Endothelial cell of umbilical vein (primary cell): ENCODE measurements at regions of chr2 and their contacts with region 1.

Region 1: GRCh38 chr2:118003396-118003824 is 10.5 kb downstream of the CCDC93 start:
- DNase-seq: peak; percentile 88
- H3K4me3 ChIP-seq: no peak overlapping the region
- H3K27ac ChIP-seq: peak overlapping the region; percentile 42
- H3K4me1 ChIP-seq: no peaks in the 10 kb centered on the region
- H3K27me3 ChIP-seq: no peaks in the 10 kb centered on the region
- CTCF ChIP-seq: peak; percentile 74 to 76
- POLR2A ChIP-seq: no peak

Region 2: DNA sequence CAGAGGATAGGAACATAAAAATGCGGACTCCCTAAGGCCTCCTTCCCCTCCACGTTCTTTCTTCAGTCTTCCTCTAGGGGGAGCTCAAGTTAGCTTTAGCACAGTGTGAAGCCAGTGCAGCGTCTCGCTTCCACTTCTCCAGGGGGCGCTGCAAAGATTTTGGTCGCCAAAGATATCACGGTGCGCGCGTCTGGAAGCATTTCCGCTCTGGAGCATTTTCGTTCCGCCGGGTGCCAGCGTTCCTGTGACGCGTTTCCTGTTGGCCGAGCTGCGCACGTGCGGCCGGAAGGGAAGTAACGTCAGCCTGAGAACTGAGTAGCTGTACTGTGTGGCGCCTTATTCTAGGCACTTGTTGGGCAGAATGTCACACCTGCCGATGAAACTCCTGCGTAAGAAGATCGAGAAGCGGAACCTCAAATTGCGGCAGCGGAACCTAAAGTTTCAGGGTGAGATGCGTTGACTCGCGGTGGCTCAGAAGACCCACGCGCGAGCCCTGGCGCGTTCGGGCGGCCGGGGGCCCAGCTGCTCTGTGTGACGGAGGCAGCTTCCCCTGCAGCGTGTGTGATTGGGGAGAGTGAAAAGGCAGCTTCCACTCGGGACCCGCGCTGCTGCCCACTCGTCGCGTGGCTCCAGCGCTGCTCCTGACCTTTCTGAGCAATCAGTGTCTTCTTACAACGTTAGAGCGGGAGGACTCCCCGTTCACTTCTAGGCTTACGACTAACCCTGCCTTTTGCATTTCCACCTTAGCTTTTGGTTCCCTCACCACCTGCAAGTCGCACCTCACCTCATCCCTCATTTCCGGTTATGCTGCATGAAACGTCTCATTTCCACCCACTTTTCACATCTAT is 188.8 kb before region 1 on chr2 and contains the start of gene DDX18:
- CTCF ChIA-PET with region 1: interaction called, 132 read pairs
- POLR2A ChIA-PET with region 1: interaction called, 4 read pairs
- dilution Hi-C with region 1: no loop called
- intact Hi-C with region 1: loop called (anchors 1 kb)
- DNase-seq: peak; percentile 99
- H3K4me3 ChIP-seq: peak within 1 kb of the TSS; percentile 40 to 82 (median 60)
- H3K27ac ChIP-seq: peak within 1 kb of the TSS; percentile 89
- H3K4me1 ChIP-seq: peaks cover 10% of the 10 kb centered on the region
- H3K27me3 ChIP-seq: peaks cover 0 to 2% of the 10 kb centered on the region in 2 experiments
- CTCF ChIP-seq: peak; percentile 100
- POLR2A ChIP-seq: peak; percentile 87
- total RNA-seq, gene DDX18: 47.8 and 50.4 TPM in 2 replicates

Region 3: GRCh38 chr2:117930775-117931174 is 72.6 kb before region 1 on chr2:
- CTCF ChIA-PET with region 1: interaction called, 11 read pairs
- POLR2A ChIA-PET with region 1: no interaction called
- dilution Hi-C with region 1: no loop called
- intact Hi-C with region 1: loop called (anchors 5 kb)
- DNase-seq: no peak
- H3K4me3 ChIP-seq: no peak overlapping the region
- H3K27ac ChIP-seq: no peak overlapping the region
- H3K4me1 ChIP-seq: peaks cover 4% of the 10 kb centered on the region
- H3K27me3 ChIP-seq: no peaks in the 10 kb centered on the region
- CTCF ChIP-seq: no peak
- POLR2A ChIP-seq: no peak

Region 4: DNA sequence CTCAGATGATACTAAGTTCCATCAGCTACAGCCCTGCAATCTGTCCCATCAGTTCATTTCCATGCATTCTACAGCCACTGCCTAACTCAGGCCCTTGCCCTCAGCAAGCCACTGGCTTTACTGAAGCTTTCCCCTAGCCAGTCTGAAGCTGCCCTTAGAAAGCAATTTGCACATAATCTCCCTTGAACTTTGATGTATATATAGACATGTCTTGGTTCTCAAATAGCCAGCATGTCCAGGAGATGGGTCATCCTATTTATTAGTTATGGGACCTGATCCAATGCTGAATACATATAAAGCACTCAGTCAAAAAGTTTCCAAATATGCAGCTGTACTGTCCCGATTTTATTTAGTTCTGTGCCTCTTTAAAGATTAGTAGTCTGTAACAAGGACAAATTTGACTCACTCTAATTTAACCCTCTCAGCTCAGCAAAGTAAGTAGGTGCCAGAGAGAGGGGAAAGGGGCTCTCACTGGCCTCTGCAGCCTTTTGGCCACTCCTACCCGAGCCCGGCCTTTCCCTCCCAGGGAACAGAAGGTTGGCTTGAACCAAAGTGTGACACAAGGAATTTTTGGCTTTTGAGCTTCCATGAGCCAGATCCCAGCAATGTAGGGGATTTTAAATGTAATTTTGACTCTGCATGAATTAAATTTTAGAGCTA is 60.3 kb before region 1 on chr2:
- CTCF ChIA-PET with region 1: interaction called, 25 read pairs
- POLR2A ChIA-PET with region 1: no interaction called
- dilution Hi-C with region 1: no loop called
- intact Hi-C with region 1: loop called (anchors 5 kb)
- DNase-seq: no peak
- H3K4me3 ChIP-seq: no peak overlapping the region
- H3K27ac ChIP-seq: no peak overlapping the region
- H3K4me1 ChIP-seq: no peaks in the 10 kb centered on the region
- H3K27me3 ChIP-seq: no peaks in the 10 kb centered on the region
- CTCF ChIP-seq: no peak
- POLR2A ChIP-seq: no peak

Region 5: DNA sequence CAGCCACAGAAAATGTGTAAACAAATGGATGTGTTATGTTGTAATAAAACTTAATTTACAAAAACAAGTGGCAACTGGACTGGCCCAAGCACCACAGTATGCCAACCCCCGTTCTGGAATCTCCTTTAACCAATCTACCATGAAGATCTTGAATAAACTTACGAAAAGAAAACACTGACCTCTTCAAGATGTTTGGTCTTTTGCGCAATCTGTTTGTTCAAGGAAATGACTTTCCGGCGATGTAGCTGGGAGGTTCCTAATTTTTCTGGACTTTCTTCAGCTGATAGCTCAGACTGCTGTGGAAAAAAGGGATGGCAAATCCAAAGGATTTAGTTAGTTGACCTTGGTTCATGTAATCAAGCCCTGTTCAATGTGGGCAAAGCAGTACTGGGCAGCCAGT is 45.2 kb before region 1 on chr2:
- CTCF ChIA-PET with region 1: interaction called, 63 read pairs
- POLR2A ChIA-PET with region 1: no interaction called
- dilution Hi-C with region 1: no loop called
- intact Hi-C with region 1: loop called (anchors 1 kb)
- DNase-seq: peak; percentile 88
- H3K4me3 ChIP-seq: no peak overlapping the region
- H3K27ac ChIP-seq: peak overlapping the region; percentile 86
- H3K4me1 ChIP-seq: peaks cover 37% of the 10 kb centered on the region
- H3K27me3 ChIP-seq: no peaks in the 10 kb centered on the region
- CTCF ChIP-seq: no peak
- POLR2A ChIP-seq: no peak

Region 6: DNA sequence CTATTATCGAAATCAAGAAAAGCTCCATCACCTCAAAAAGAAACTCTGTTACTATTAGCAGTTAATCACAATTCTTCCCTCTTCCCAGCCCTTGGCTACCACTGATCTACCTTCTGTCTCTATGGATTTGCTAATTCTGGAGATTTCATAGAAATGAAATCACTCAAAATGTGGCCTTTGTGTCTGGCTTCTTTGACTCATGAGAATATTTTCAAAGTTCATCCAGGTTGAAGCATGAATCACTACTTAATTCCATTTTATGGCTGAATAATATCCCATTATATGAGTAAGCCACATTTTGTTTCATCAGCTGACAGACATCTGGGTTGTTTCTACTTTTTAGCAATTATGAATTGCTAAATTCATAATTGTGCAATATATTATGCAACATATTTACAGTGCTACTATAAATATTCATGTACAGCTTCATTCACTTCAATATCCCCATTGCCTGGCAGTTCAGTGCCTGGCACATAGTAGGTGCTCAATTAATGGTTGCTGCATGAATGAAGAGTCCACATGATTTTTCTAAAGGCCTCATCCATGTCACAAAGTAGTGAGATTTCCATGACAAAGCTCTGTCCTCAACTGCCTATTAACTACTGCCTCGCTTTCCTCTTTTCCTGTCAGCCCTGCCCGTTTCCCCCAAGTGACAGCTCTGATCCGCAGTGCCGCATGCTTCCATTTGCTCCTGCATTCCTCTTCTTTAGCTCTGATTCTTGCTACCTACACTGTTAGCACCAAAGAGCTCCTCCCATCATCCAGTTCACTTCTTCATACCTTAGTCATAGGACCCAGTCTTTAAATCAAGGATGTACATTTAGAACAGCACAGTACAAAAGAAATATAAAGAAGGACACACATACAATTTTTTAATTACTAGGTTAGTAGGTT is 22.4 kb before region 1 on chr2:
- CTCF ChIA-PET with region 1: interaction called, 33 read pairs
- POLR2A ChIA-PET with region 1: no interaction called
- dilution Hi-C with region 1: no loop called
- intact Hi-C with region 1: no loop called
- DNase-seq: peak; percentile 58
- H3K4me3 ChIP-seq: no peak overlapping the region
- H3K27ac ChIP-seq: peak overlapping the region; percentile 60
- H3K4me1 ChIP-seq: peaks cover 13% of the 10 kb centered on the region
- H3K27me3 ChIP-seq: no peaks in the 10 kb centered on the region
- CTCF ChIP-seq: no peak
- POLR2A ChIP-seq: no peak

Region 7: GRCh38 chr2:118013724-118014491 is 10.5 kb after region 1 on chr2 and contains the start of gene CCDC93:
- CTCF ChIA-PET with region 1: interaction called, 47 read pairs
- POLR2A ChIA-PET with region 1: no interaction called
- dilution Hi-C with region 1: no loop called
- intact Hi-C with region 1: no loop called
- DNase-seq: peak; percentile 89
- H3K4me3 ChIP-seq: peak within 1 kb of the TSS; percentile 89 to 97 (median 95)
- H3K27ac ChIP-seq: peak within 1 kb of the TSS; percentile 80
- H3K4me1 ChIP-seq: peaks cover 14% of the 10 kb centered on the region
- H3K27me3 ChIP-seq: peaks cover 2 to 3% of the 10 kb centered on the region in 2 experiments
- CTCF ChIP-seq: no peak
- POLR2A ChIP-seq: peak; percentile 71
- total RNA-seq, gene CCDC93: 29.3 and 35.1 TPM in 2 replicates

Region 8: GRCh38 chr2:118122594-118123281 is 119.3 kb after region 1 on chr2:
- CTCF ChIA-PET with region 1: no interaction called
- POLR2A ChIA-PET with region 1: no interaction called
- dilution Hi-C with region 1: no loop called
- intact Hi-C with region 1: no loop called
- DNase-seq: no peak
- H3K4me3 ChIP-seq: no peak overlapping the region
- H3K27ac ChIP-seq: peak overlapping the region; percentile 62
- H3K4me1 ChIP-seq: peaks cover 28% of the 10 kb centered on the region
- H3K27me3 ChIP-seq: no peaks in the 10 kb centered on the region
- CTCF ChIP-seq: no peak
- POLR2A ChIP-seq: no peak